ENCODE measurements at regions of chr11 and their contacts with region 1.

Region 1: GRCh38 chr11:109946322-109946846 is 146.8 kb upstream of the ZC3H12C start:
- DNase-seq: peak; percentile 60 to 95
- H3K4me3 ChIP-seq: peak overlapping the region; percentile 40 to 51
- H3K27ac ChIP-seq: peak overlapping the region; percentile 47 to 78
- H3K4me1 ChIP-seq: no peaks in the 10 kb centered on the region
- H3K27me3 ChIP-seq: no peaks in the 10 kb centered on the region
- CTCF ChIP-seq: peak; percentile 85 to 94 (median 91)

Region 2: DNA sequence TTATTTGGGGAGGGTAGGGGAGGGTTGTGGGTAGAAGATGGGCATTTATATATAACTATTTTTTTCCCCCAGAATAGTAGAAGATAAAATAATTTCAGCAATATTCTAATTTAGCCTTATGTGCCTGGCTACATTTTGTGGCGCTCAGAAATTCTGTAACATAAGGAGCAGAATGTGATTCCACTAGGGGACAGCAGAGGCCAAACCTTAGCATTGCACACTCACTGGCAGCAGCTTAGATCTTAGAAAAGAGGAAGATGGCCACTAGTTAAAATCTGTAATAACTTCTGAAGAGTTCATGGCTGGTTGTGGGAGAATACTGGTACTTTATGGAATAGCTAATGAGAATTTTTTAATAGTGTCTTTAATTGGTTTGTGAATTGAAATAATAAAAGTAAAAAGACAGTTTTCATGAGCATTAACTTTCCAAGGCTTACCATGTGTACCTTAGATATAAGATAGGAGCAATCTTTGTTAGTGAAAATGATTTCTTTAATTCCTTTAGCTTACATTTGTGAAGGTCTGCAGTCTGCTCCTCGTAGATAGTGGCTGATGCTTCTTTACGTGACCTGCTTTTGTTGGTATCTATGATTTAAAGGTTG is 1248.4 kb before region 1 on chr11:
- intact Hi-C with region 1: loop called (anchors 10 kb)
- DNase-seq: peak in 1 of 2 donors; percentile 68
- H3K4me3 ChIP-seq: no peak overlapping the region
- H3K27ac ChIP-seq: no peak overlapping the region
- H3K4me1 ChIP-seq: no peaks in the 10 kb centered on the region
- H3K27me3 ChIP-seq: no peaks in the 10 kb centered on the region
- CTCF ChIP-seq: peak; percentile 60 to 89 (median 79)

Region 3: DNA sequence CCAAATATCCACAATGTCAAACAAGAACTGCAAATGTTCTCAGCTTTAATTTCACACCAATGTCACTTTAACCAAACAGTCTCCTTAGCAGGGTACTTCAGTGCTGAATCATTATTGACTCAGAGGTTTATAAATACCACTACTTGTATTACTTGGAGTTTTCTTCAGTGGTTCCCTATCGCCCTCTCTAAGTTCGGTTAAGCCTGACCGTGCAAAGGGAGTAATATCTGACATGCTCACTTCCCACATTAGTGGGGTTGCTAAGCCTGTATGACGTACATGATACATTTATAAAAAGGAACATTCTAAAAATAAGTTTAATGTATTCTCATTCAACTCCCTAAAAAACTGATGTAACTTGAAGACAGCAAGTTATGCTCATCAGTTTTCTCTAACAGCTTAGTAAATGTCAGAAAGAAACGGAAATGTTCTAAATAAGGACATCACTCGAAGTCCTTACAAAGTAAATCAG is 53.7 kb after region 1 on chr11:
- intact Hi-C with region 1: loop called (anchors 2 kb)
- DNase-seq: peak in 1 of 2 donors; percentile 66
- H3K4me3 ChIP-seq: no peak overlapping the region
- H3K27ac ChIP-seq: peak overlapping the region; percentile 10 to 45
- H3K4me1 ChIP-seq: peaks cover 0 to 6% of the 10 kb centered on the region in 2 donors
- H3K27me3 ChIP-seq: no peaks in the 10 kb centered on the region
- CTCF ChIP-seq: no peak

Region 4: GRCh38 chr11:110173811-110174644 is 227.6 kb after region 1 on chr11:
- intact Hi-C with region 1: loop called (anchors 5 kb)
- DNase-seq: peak in 1 of 2 donors; percentile 80
- H3K4me3 ChIP-seq: peak overlapping the region; percentile 41 to 42
- H3K27ac ChIP-seq: no peak overlapping the region
- H3K4me1 ChIP-seq: no peaks in the 10 kb centered on the region
- H3K27me3 ChIP-seq: no peaks in the 10 kb centered on the region
- CTCF ChIP-seq: peak; percentile 59 to 77 (median 73)

Region 5: GRCh38 chr11:110296226-110297075 is 350.1 kb after region 1 on chr11 and contains the start of gene RDX:
- intact Hi-C with region 1: loop called (anchors 5 kb)
- DNase-seq: peak in 1 of 2 donors; percentile 82
- H3K4me3 ChIP-seq: peak within 1 kb of the TSS; percentile 83 to 95
- H3K27ac ChIP-seq: peak within 1 kb of the TSS; percentile 87 to 95
- H3K4me1 ChIP-seq: peaks cover 5 to 18% of the 10 kb centered on the region in 2 donors
- H3K27me3 ChIP-seq: no peaks in the 10 kb centered on the region
- CTCF ChIP-seq: peak in 1 of 3 experiments; percentile 17
- total RNA-seq, gene RDX: 105 TPM

Region 6: GRCh38 chr11:110376711-110377324 is 430.4 kb after region 1 on chr11:
- intact Hi-C with region 1: loop called (anchors 5 kb)
- DNase-seq: peak; percentile 39 to 79
- H3K4me3 ChIP-seq: peak overlapping the region in 1 of 2 donors; percentile 24
- H3K27ac ChIP-seq: peak overlapping the region in 1 of 2 donors; percentile 29
- H3K4me1 ChIP-seq: peaks cover 0 to 6% of the 10 kb centered on the region in 2 donors
- H3K27me3 ChIP-seq: no peaks in the 10 kb centered on the region
- CTCF ChIP-seq: peak; percentile 41 to 81 (median 71)

Region 7: GRCh38 chr11:110429731-110430266 is 483.4 kb after region 1 on chr11 and contains the start of gene FDX1:
- intact Hi-C with region 1: loop called (anchors 2 kb)
- DNase-seq: peak; percentile 22 to 89
- H3K4me3 ChIP-seq: peak within 1 kb of the TSS; percentile 95 to 98
- H3K27ac ChIP-seq: peak within 1 kb of the TSS; percentile 87 to 96
- H3K4me1 ChIP-seq: peaks cover 0 to 17% of the 10 kb centered on the region in 2 donors
- H3K27me3 ChIP-seq: no peaks in the 10 kb centered on the region
- CTCF ChIP-seq: peak; percentile 31 to 81 (median 54)
- total RNA-seq, gene FDX1: 17.6 TPM

Measured in ascending aorta (tissue), 2 donors.